SK-N-SH (cell line): ENCODE measurements at regions of chr4 and their contacts with region 1.

Region 1: GRCh38 chr4:88217920-88218319 is 59.5 kb upstream of the ABCG2 start:
- DNase-seq: no peak
- H3K4me3 ChIP-seq: no peak overlapping the region
- H3K27ac ChIP-seq: no peak overlapping the region
- H3K4me1 ChIP-seq: no peaks in the 10 kb centered on the region
- H3K27me3 ChIP-seq: no peaks in the 10 kb centered on the region; the same call in 1 of the 2 replicates
- CTCF ChIP-seq: no peak
- EP300 ChIP-seq: no peak
- RAD21 ChIP-seq: no peak

Region 2: DNA sequence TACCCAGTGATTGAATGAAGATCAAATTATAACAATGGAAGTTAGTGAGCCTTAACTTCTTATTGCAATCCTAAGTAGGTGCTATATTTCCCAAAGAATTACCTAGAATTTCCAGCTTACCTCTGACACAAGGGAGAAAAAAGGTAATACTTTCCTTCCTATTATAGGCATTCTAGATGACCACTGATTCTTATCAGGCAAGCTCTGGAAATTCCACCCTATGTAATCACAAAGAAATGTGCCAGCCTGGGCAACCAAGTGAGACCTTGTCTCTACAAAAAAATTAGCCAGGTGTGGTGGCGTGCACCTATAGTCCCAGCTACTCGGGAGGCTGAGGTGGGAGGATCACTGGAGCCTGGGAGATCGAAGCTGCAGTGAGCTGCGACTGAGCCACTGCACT is 131.3 kb before region 1 on chr4:
- CTCF ChIA-PET with region 1: no interaction called
- POLR2A ChIA-PET with region 1: no interaction called
- DNase-seq: no peak
- H3K4me3 ChIP-seq: no peak overlapping the region
- H3K27ac ChIP-seq: no peak overlapping the region
- H3K4me1 ChIP-seq: no peaks in the 10 kb centered on the region
- H3K27me3 ChIP-seq: no peaks in the 10 kb centered on the region
- CTCF ChIP-seq: no peak
- EP300 ChIP-seq: no peak
- RAD21 ChIP-seq: no peak

Region 3: GRCh38 chr4:88230461-88230891 is 12.6 kb after region 1 on chr4:
- CTCF ChIA-PET with region 1: interaction called, 24 read pairs
- POLR2A ChIA-PET with region 1: no interaction called
- DNase-seq: no peak
- H3K4me3 ChIP-seq: no peak overlapping the region
- H3K27ac ChIP-seq: no peak overlapping the region
- H3K4me1 ChIP-seq: no peaks in the 10 kb centered on the region
- H3K27me3 ChIP-seq: no peaks in the 10 kb centered on the region
- CTCF ChIP-seq: no peak
- EP300 ChIP-seq: no peak
- RAD21 ChIP-seq: no peak